ENCODE measurements at regions of chr6 and their contacts with region 1.

Region 1: GRCh38 chr6:1013656-1014430 is 298.1 kb upstream of the FOXQ1 start:
- DNase-seq: no peak
- H3K4me3 ChIP-seq: no peak overlapping the region
- H3K27ac ChIP-seq: no peak overlapping the region
- H3K4me1 ChIP-seq: no peaks in the 10 kb centered on the region
- H3K27me3 ChIP-seq: no peaks in the 10 kb centered on the region
- CTCF ChIP-seq: no peak

Region 2: GRCh38 chr6:766625-767024 is 247.2 kb before region 1 on chr6:
- CTCF ChIA-PET with region 1: no interaction called
- dilution Hi-C with region 1: no loop called
- in situ Hi-C with region 1: no loop called
- intact Hi-C with region 1: no loop called
- DNase-seq: no peak
- H3K4me3 ChIP-seq: no peak overlapping the region
- H3K27ac ChIP-seq: no peak overlapping the region
- H3K4me1 ChIP-seq: no peaks in the 10 kb centered on the region
- H3K27me3 ChIP-seq: no peaks in the 10 kb centered on the region
- CTCF ChIP-seq: no peak

Region 3: DNA sequence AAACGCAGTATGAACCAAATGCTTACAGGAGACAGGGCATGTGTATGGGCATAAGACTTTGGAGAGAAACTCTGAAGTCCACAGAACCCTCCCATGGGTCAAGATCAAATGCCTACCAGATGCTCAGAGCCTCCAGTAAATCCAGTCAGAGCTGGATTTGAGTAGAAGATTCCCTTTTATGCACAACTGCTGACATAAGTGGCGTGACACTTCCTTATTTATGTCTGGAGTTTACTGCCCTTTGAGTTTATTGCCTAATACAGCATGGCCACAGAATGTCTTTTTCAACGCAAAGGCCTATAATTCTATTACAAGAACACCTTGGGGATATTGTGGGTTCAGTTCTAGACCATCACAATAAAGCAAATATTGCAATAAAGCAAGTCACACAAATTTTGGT is 78.1 kb after region 1 on chr6:
- CTCF ChIA-PET with region 1: no interaction called
- dilution Hi-C with region 1: no loop called
- in situ Hi-C with region 1: no loop called
- intact Hi-C with region 1: no loop called
- DNase-seq: no peak
- H3K4me3 ChIP-seq: no peak overlapping the region
- H3K27ac ChIP-seq: no peak overlapping the region
- H3K4me1 ChIP-seq: no peaks in the 10 kb centered on the region
- H3K27me3 ChIP-seq: no peaks in the 10 kb centered on the region
- CTCF ChIP-seq: no peak

Region 4: GRCh38 chr6:1103945-1104623 is 90.2 kb after region 1 on chr6:
- CTCF ChIA-PET with region 1: no interaction called
- dilution Hi-C with region 1: loop called (anchors 5 kb)
- in situ Hi-C with region 1: no loop called
- intact Hi-C with region 1: no loop called
- DNase-seq: no peak
- H3K4me3 ChIP-seq: no peak overlapping the region
- H3K27ac ChIP-seq: no peak overlapping the region
- H3K4me1 ChIP-seq: peaks cover 3% of the 10 kb centered on the region
- H3K27me3 ChIP-seq: no peaks in the 10 kb centered on the region
- CTCF ChIP-seq: no peak